SK-N-SH (cell line): ENCODE measurements at regions of chr17 and their contacts with region 1.

Region 1: GRCh38 chr17:80426681-80427326 is 11.8 kb downstream of the ENDOV start:
- DNase-seq: peak; percentile 98
- H3K4me3 ChIP-seq: no peak overlapping the region; a peak in 1 of 4 replicates
- H3K27ac ChIP-seq: no peak overlapping the region
- H3K4me1 ChIP-seq: no peaks in the 10 kb centered on the region; a peak in 1 of 4 replicates
- H3K27me3 ChIP-seq: no peaks in the 10 kb centered on the region
- CTCF ChIP-seq: peak; percentile 99
- EP300 ChIP-seq: no peak
- RAD21 ChIP-seq: peak; percentile 99

Region 2: DNA sequence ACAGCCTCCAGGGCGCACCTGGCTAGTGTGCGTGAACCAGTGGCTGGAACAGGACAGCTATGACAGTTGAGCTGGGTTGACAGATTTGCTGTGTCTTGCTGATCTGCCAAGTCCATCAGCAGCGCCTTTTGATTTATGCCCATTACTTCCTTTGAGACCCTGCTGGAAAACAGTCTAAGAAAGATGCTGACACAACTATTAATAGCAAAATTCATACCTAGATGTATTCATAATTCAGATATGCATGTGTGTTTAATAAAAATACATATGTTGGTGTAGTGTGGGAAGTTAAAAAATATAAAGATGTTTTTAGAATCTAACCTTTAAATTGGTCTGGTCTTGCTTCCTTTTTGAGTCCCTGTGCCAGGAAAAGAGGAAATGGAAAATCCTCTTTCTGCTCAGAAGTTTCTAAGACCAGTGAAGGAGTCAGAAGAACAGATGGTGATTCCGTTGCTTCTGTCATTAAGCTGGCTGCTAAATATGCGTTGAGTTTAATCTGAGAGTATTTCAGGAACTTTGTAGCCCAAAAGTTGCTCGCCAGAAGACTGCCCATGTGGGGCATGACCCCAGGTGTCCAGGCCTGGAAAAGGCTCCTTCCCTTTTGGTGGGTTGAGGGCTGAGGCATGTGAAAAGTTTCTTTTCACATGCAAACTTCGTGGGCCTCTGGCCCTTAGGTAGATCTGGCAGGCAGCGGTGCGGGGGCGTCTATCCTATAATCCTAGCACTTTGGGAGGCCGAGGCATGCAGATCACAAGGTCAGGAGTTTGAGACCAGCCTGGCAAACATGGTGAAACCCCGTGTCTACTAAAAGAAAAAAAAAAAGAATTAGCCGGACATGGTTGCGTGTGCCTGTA is 51.8 kb before region 1 on chr17:
- CTCF ChIA-PET with region 1: no interaction called
- POLR2A ChIA-PET with region 1: no interaction called
- DNase-seq: no peak
- H3K4me3 ChIP-seq: no peak overlapping the region
- H3K27ac ChIP-seq: no peak overlapping the region
- H3K4me1 ChIP-seq: no peaks in the 10 kb centered on the region
- H3K27me3 ChIP-seq: no peaks in the 10 kb centered on the region
- CTCF ChIP-seq: no peak
- EP300 ChIP-seq: no peak
- RAD21 ChIP-seq: no peak

Region 3: GRCh38 chr17:80441133-80441578 is 14.4 kb after region 1 on chr17:
- CTCF ChIA-PET with region 1: interaction called, 29 read pairs
- POLR2A ChIA-PET with region 1: interaction called, 3 read pairs
- DNase-seq: peak; percentile 59
- H3K4me3 ChIP-seq: no peak overlapping the region
- H3K27ac ChIP-seq: no peak overlapping the region
- H3K4me1 ChIP-seq: peaks cover 0 to 10% of the 10 kb centered on the region in 2 experiments; a peak in 1 of 4 replicates
- H3K27me3 ChIP-seq: no peaks in the 10 kb centered on the region
- CTCF ChIP-seq: no peak
- EP300 ChIP-seq: no peak
- RAD21 ChIP-seq: no peak

Region 4: DNA sequence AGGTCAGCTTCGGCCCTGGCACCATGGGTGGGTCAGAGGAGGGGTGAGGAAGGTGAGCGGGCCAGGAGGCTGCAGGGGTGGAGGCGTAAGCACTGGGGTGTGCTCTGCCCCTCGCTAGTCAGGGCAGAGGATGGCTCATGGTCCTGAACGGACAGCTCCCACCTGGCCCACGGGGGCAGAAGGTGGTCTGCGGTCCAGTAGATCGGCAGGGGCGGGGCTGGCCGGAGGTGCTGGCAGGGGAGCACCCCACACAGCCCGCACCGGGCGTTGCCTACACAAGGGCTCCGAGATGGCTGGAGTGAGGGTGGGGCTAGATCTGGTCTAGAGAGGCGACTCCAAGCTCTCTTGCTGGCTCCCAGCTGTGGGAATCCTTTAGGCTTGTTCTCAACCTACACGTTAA is 41.4 kb after region 1 on chr17:
- CTCF ChIA-PET with region 1: interaction called, 17 read pairs
- POLR2A ChIA-PET with region 1: no interaction called
- DNase-seq: peak; percentile 62
- H3K4me3 ChIP-seq: no peak overlapping the region
- H3K27ac ChIP-seq: no peak overlapping the region
- H3K4me1 ChIP-seq: peaks cover 0 to 9% of the 10 kb centered on the region in 2 experiments; a peak in 1 of 4 replicates
- H3K27me3 ChIP-seq: peaks cover 94% of the 10 kb centered on the region
- CTCF ChIP-seq: no peak
- EP300 ChIP-seq: no peak
- RAD21 ChIP-seq: no peak

Region 5: DNA sequence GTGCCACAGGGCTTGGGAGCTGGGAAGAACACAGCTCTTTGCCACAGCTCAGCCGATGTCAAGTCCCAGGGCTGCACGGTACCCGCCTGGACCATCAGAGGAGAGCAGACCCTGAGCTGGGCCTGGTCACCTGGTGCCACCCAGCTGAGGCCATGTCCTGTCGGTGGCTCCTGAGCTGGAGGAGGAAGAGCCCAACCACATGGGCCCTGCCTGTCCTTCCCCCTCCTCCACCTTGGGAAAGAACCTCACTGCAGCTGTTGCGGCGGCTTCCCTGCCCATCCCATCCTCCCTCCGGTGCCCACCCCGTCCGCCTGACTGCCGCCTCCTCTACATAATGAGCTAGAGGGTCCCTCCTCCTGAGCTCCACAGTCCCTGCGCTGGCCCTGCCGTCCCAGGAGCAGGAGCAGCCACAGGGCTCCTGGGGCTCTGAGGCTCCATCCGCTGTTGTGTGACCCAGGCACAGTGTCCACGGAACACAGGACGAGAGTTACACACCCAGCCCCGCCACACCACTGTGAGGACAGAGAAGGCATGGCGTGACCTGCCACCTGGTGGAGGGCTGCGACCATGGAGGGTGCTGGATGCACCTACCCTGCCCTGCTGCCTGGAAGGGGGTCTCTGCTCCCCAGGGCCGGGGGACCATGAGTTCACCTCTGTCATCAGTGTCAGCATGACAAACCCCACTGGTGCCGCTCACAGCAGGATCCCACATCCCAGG is 543.4 kb after region 1 on chr17:
- CTCF ChIA-PET with region 1: interaction called, 74 read pairs
- POLR2A ChIA-PET with region 1: no interaction called
- DNase-seq: peak; percentile 82
- H3K4me3 ChIP-seq: no peak overlapping the region
- H3K27ac ChIP-seq: no peak overlapping the region
- H3K4me1 ChIP-seq: peaks cover 9 to 33% of the 10 kb centered on the region in 2 experiments; a peak in 2 of 4 replicates
- H3K27me3 ChIP-seq: peaks cover 3% of the 10 kb centered on the region; the same call in 1 of the 2 replicates
- CTCF ChIP-seq: peak; percentile 58
- EP300 ChIP-seq: no peak
- RAD21 ChIP-seq: peak; percentile 64

Region 6: GRCh38 chr17:80991645-80992076 is 564.9 kb after region 1 on chr17 and contains the start of gene CHMP6:
- CTCF ChIA-PET with region 1: interaction called, 22 read pairs
- POLR2A ChIA-PET with region 1: no interaction called
- DNase-seq: peak; percentile 99
- H3K4me3 ChIP-seq: peak within 1 kb of the TSS; percentile 79 to 89
- H3K27ac ChIP-seq: no peak within 1 kb of the TSS; a peak in 1 of 4 replicates
- H3K4me1 ChIP-seq: peaks cover 10 to 17% of the 10 kb centered on the region in 2 experiments; a peak in 1 of 4 replicates
- H3K27me3 ChIP-seq: no peaks in the 10 kb centered on the region
- CTCF ChIP-seq: peak; percentile 32
- EP300 ChIP-seq: no peak; a peak in 1 of 4 replicates
- RAD21 ChIP-seq: no peak
- polyA plus RNA-seq, gene CHMP6: 44.1 and 44.3 TPM in 2 replicates